WTC11 (cell line): ENCODE measurements at regions of chr11 and their contacts with region 1.

Region 1: DNA sequence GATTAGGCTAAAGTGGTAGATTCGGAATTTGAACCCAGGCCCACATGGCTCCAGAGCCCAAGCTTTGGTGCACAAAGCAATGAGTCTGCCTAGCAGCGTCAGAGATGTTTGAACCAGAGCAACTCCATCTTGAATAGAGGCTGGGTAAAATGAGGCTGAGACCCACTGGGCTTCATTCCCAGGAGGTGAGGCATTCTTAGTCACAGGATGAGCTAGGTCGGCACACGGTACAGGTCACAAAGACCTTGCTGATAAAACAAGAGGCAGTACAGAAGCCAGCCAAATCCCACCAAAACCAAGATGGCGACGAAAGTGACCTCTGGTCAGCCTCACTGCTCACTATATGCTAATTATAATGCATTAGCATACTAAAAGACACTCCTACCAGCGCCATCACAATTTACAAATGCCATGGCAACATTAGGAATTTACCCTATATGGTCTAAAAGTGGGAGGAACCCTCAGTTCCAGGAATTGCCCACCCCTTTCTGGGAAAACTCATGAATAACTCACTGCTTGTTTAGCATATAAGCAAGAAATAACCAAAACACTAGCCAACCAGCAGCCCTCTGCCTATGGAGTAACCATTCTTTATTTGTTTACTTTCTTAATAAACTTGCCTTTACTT is 40.3 kb upstream of the DAGLA start:
- DNase-seq: no peak
- ATAC-seq: no peak
- H3K4me3 Mint-ChIP-seq: no peak overlapping the region
- H3K27ac Mint-ChIP-seq: no peak overlapping the region
- H3K4me1 Mint-ChIP-seq: 0 out of 2 replicates have a peak, but pooled peaks cover 6% of the 10 kb centered on the region
- H3K27me3 Mint-ChIP-seq: no peaks in the 10 kb centered on the region
- CTCF ChIP-seq: no peak

Region 2: DNA sequence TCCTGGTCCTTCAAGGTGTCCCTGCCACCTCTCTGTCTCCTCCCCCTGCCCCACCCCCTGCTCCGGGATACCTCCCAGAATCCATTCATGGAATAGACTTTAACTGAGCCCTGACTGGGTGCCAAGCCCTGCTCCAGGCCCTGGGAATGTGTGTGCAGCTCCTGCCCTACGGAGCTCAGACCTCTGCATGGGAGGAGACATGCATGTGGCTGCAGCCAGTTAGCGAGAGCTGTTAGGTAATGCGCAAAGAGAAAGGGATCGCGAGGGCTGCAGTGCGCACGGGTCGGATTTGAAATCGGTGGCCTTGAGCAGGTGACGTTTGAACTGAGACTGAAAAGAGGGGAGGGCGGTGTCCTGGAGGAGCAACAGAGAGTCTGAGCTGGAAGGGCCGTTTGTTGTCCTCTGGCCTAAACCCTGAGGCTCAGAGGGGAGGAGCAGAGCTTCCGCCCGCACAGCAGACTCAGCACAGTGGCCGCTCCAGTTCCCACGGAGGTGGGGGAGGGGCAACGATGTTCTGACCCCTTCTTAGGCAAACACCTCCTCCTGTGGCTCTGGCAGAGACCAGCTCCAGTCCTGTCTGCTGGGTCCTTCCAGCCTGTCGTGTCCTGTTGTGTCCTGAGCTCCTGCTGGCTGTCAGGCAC is 151.2 kb before region 1 on chr11:
- CTCF ChIA-PET with region 1: interaction called, 52 read pairs
- POLR2A ChIA-PET with region 1: no interaction called
- DNase-seq: peak; percentile 76
- ATAC-seq: peak; percentile 60
- H3K4me3 Mint-ChIP-seq: peak overlapping the region; percentile 50
- H3K27ac Mint-ChIP-seq: peak overlapping the region; percentile 95
- H3K4me1 Mint-ChIP-seq: peaks cover 42% of the 10 kb centered on the region
- H3K27me3 Mint-ChIP-seq: peaks cover 7% of the 10 kb centered on the region; the same call in 1 of the 2 replicates
- CTCF ChIP-seq: no peak

Region 3: GRCh38 chr11:61555051-61555969 is 84.6 kb before region 1 on chr11:
- CTCF ChIA-PET with region 1: interaction called, 12 read pairs
- POLR2A ChIA-PET with region 1: no interaction called
- DNase-seq: peak; percentile 66
- ATAC-seq: peak; percentile 64
- H3K4me3 Mint-ChIP-seq: peak overlapping the region; percentile 70
- H3K27ac Mint-ChIP-seq: no peak overlapping the region
- H3K4me1 Mint-ChIP-seq: peaks cover 39% of the 10 kb centered on the region
- H3K27me3 Mint-ChIP-seq: peaks cover 30% of the 10 kb centered on the region
- CTCF ChIP-seq: peak; percentile 49; the same call in 1 of the 2 replicates

Region 4: GRCh38 chr11:61598886-61599868 is 40.8 kb before region 1 on chr11:
- CTCF ChIA-PET with region 1: interaction called, 19 read pairs
- POLR2A ChIA-PET with region 1: no interaction called
- DNase-seq: peak; percentile 59
- ATAC-seq: peak; percentile 77
- H3K4me3 Mint-ChIP-seq: peak overlapping the region; percentile 38; the same call in 1 of the 2 replicates
- H3K27ac Mint-ChIP-seq: peak overlapping the region; percentile 60; the same call in 1 of the 2 replicates
- H3K4me1 Mint-ChIP-seq: peaks cover 44% of the 10 kb centered on the region
- H3K27me3 Mint-ChIP-seq: no peaks in the 10 kb centered on the region; the same call in 1 of the 2 replicates
- CTCF ChIP-seq: no peak

Region 5: GRCh38 chr11:61671527-61671926 is 31.6 kb after region 1 on chr11:
- CTCF ChIA-PET with region 1: interaction called, 11 read pairs
- POLR2A ChIA-PET with region 1: no interaction called
- DNase-seq: peak; percentile 61
- ATAC-seq: peak; percentile 91
- H3K4me3 Mint-ChIP-seq: no peak overlapping the region
- H3K27ac Mint-ChIP-seq: no peak overlapping the region
- H3K4me1 Mint-ChIP-seq: peaks cover 14% of the 10 kb centered on the region
- H3K27me3 Mint-ChIP-seq: no peaks in the 10 kb centered on the region; the same call in 1 of the 2 replicates
- CTCF ChIP-seq: no peak

Region 6: DNA sequence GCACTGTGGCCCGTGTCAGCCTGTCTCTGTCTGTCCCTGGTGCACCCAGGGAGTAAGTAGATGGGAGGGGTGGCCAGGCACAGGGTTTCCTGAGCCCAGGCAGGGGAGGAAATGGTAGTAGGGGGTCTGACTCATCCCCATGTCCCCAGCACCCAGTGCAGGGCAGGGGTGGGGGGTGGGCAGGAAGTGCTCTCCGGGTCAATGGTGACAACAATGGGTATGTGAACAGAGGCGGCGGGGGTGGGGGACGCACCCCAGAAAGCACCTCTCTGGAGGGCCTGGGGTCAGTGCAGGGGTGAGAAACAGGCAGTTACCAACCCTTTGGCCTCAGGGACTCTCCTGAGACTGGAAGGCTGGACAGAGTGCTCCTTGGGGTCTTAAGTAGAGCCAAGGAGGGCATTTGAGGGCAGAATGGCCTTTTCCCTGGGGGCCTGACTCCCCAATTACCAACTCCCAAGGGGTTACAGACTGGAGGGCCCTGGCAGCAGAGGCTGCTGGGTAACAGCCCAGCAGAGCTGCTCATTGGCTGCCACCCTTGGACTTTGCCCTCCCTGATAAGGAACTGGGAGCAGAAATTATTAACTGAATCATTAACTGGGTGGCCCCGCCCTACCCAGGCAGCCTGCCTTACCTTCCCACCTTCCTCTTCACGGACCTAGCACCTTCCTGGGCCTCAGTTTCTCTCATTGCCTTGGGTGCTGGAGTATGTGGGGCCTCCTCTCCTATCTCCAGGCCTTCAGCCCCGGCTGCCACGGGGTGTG is 116.7 kb after region 1 on chr11:
- CTCF ChIA-PET with region 1: no interaction called
- POLR2A ChIA-PET with region 1: no interaction called
- DNase-seq: no peak
- ATAC-seq: no peak
- H3K4me3 Mint-ChIP-seq: no peak overlapping the region
- H3K27ac Mint-ChIP-seq: no peak overlapping the region
- H3K4me1 Mint-ChIP-seq: peaks cover 22% of the 10 kb centered on the region
- H3K27me3 Mint-ChIP-seq: peaks cover 24% of the 10 kb centered on the region
- CTCF ChIP-seq: no peak